Testis (tissue), 5 donors: ENCODE measurements at regions of chr6 and their contacts with region 1.

Region 1: GRCh38 chr6:163427498-163428254 is 13.2 kb downstream of the QKI start:
- DNase-seq: no peak
- H3K4me3 ChIP-seq: no peak overlapping the region
- H3K27ac ChIP-seq: no peak overlapping the region
- H3K4me1 ChIP-seq: peaks cover 30% of the 10 kb centered on the region
- H3K27me3 ChIP-seq: no peaks in the 10 kb centered on the region
- CTCF ChIP-seq: peak in 2 of 3 experiments; percentile 25 to 26
- POLR2A ChIP-seq: no peak

Region 2: DNA sequence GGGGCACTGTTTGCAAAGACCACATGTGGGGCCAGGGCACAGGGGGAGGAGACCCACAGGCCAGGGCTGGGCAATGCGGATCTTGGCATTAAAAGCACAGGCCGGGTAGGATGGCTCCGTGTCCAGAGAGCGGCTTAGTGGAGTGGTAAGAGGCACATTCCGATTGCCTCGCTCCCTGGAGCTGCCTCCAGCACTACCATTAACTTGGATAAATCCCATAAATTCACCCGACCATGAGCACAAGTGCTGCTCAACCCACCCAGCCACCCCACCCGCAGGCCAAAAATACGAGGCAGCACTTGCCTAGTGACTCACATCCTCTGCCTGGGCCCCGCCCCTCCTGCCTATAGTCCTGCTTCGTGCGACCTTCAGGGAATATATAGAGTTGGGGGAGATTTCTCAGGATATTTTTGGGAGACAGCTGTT is 80.6 kb before region 1 on chr6:
- intact Hi-C with region 1: no loop called
- DNase-seq: no peak
- H3K4me3 ChIP-seq: no peak overlapping the region
- H3K27ac ChIP-seq: no peak overlapping the region
- H3K4me1 ChIP-seq: peaks cover 25% of the 10 kb centered on the region
- H3K27me3 ChIP-seq: no peaks in the 10 kb centered on the region
- CTCF ChIP-seq: no peak
- POLR2A ChIP-seq: no peak

Region 3: DNA sequence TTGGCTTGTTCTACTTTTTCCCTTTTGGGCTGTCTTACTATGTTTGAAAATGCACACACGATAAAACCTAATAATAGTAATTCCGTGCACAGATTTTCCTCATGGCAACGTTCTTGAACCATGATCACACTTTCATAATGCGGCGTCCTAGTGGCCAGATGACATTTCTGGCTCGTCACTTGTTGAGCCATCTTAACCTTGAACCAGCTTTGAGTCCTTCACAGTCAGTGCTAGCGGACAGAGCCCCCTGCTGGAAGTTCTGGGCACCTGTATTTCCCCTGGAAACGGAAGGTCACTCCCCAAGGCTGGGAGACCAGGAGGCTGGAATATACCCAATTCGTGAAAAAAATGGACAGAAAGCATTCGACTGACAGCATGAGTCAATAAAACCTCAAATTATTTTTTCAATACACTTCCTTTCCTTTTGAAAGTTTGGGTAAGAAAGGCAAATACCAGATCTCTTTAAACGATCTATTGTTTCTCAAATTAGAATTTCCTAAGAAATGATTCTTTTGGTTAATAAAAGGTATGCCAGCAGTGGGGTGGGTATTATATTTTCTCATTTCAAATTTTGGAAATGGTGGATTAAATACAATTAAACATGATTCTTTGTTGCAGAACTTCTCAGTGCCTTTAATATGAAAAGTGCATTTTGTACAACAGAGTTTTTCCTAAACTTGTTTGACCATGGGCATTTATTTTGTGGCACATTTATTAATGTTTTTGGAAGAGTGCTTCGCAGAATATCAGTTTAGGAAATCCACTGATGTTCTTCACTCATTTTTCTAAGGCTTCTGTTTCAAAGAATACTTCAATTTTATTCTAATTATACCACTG is 529.1 kb after region 1 on chr6:
- intact Hi-C with region 1: loop called (anchors 10 kb)
- DNase-seq: peak; percentile 86
- H3K4me3 ChIP-seq: no peak overlapping the region
- H3K27ac ChIP-seq: no peak overlapping the region
- H3K4me1 ChIP-seq: peaks cover 11% of the 10 kb centered on the region
- H3K27me3 ChIP-seq: no peaks in the 10 kb centered on the region
- CTCF ChIP-seq: peak; percentile 87 to 92 (median 88)
- POLR2A ChIP-seq: no peak

Region 4: DNA sequence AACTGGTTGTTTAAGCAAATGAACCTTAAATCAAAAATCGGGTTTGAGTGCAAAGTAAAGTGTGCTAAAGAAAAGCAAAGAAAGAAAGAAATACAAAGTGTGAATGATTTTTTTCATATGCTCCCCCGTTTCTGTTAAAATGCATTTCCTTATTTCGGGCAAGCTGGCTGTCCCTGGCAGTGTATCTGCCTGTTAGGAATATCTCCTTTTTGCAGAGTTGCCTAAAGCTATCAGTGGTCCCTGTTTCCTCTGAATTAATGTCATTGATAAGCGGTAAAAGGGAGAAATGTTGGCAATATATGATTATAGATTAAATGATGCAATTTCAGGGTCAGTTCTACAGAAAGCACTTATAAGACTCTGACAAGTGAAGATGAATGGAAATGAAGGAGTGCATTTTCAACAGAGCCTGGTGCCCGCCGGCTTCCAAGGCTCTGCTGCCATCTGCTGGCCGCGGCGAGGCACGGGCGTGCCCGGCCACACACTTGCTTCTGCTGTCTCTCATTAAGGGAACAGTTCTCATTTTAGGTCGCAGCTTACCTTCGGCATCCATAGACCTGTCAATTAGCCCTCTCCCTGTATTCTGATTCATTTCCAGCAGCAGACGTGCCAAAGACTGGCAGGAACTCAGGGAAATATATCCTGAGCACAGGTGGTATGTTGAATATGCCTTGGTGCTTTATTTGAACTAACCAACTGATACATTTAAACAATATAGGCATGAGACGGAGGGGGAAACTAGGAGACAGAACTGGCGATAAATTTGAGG is 1499.8 kb after region 1 on chr6:
- intact Hi-C with region 1: loop called (anchors 10 kb)
- DNase-seq: peak; percentile 83
- H3K4me3 ChIP-seq: no peak overlapping the region
- H3K27ac ChIP-seq: no peak overlapping the region
- H3K4me1 ChIP-seq: no peaks in the 10 kb centered on the region
- H3K27me3 ChIP-seq: no peaks in the 10 kb centered on the region
- CTCF ChIP-seq: peak; percentile 81 to 97 (median 84)
- POLR2A ChIP-seq: no peak